Gastrocnemius medialis (tissue), 4 donors: ENCODE measurements at regions of chr17 and their contacts with region 1.

Region 1: DNA sequence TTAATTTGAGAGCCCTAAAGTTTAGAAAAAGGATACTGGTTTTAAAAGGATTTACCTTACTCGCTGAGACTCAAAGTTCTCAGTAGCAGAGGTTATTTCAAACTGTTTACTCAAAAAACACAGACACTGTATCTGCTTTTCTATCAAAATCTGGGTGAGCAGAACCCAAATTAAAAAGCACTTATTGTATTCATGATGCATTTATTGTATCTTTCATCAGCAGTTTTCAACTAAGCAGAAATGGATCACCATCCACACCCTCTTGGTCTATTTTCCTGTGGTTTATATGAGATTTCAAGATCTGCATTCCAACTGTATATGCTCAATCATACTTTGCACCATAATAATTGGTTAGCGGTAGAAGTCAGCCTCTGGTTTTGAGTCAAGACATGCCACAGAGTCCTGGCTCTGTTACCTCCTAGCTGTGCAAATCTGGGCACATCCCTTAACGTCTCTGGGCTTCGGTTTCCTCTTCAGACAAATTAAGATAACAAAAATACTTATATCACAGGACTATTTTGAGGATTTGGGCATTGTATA is 109.5 kb downstream of the ASIC2 start:
- DNase-seq: no peak
- ATAC-seq: no peak
- H3K4me3 ChIP-seq: no peak overlapping the region
- H3K27ac ChIP-seq: no peak overlapping the region
- H3K4me1 ChIP-seq: no peaks in the 10 kb centered on the region
- H3K27me3 ChIP-seq: peaks cover 11 to 15% (median 11%) of the 10 kb centered on the region in 3 donors
- CTCF ChIP-seq: no peak
- POLR2A ChIP-seq: no peak

Region 2: DNA sequence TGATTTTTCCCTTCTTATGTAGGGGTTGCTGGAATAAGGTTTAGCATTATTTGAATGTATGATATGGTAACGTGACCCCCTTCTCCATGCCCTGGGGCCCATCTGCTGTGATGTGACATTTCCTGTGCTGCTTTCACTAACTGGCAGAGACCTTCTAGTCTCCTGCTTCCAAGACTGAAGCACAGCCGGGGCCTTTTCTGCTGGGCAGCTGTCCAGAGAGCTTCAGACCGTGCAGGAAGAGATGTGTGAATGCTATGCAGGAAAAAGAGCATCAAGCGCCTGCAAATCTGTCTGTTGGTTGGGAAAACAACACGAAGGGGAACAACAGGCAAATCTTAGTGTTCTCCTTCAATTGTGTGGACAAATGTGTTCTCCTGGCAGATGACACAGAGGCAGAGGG is 63.5 kb before region 1 on chr17:
- in situ Hi-C with region 1: loop called in 1 of 4 experiments (anchors 10 kb)
- intact Hi-C with region 1: no loop called
- DNase-seq: no peak
- ATAC-seq: no peak
- H3K4me3 ChIP-seq: no peak overlapping the region
- H3K27ac ChIP-seq: no peak overlapping the region
- H3K4me1 ChIP-seq: no peaks in the 10 kb centered on the region
- H3K27me3 ChIP-seq: peaks cover 0 to 11% (median 0%) of the 10 kb centered on the region in 3 donors
- CTCF ChIP-seq: no peak
- POLR2A ChIP-seq: no peak